ENCODE measurements at regions of chr18 and their contacts with region 1.

Region 1: DNA sequence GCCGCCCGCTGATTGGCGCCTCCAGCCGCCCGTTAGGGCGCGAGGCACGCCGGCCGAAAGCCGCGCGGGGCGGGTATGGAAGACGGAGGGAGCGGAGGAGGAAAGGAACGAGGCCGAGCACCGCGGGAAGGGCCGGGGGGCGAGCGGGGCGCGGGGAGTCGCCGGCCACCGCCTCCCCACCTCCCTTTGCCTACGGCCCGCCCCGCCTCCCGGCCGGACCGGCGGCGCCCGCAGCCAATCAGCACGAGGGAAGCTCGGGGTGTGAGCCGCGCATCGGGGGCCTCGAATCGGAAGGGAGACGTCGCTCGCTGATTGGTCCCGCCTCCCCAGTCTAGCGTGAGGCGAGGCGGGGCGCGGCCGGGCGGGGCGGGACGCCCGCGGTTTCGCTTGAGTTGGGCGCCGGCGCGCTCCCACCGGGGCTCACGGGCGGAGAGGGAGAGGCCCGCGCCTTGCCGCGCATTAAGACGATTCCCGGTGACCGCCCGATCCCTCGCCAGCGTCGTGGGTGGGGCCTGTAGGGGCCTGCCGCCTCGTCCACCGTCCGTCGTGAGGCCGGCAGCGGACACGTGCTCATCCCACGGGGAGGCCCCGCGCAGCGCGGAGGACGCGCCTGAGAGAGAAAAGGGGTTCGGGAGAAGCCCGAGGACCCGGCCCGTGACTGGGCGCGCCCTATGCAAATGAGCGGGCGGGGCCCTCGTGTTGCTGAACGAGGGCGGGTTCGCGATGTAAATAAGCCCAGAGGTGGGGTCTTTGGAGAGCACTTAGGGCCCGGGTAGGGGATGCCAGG is 665 bp upstream of the SMAD2 start:
- DNase-seq: peak; percentile 97
- ATAC-seq: peak; percentile 79
- H3K4me3 Mint-ChIP-seq: peak overlapping the region; percentile 77
- H3K27ac Mint-ChIP-seq: peak overlapping the region; percentile 91
- H3K4me1 Mint-ChIP-seq: peaks cover 36% of the 10 kb centered on the region
- H3K27me3 Mint-ChIP-seq: no peaks in the 10 kb centered on the region

Region 2: DNA sequence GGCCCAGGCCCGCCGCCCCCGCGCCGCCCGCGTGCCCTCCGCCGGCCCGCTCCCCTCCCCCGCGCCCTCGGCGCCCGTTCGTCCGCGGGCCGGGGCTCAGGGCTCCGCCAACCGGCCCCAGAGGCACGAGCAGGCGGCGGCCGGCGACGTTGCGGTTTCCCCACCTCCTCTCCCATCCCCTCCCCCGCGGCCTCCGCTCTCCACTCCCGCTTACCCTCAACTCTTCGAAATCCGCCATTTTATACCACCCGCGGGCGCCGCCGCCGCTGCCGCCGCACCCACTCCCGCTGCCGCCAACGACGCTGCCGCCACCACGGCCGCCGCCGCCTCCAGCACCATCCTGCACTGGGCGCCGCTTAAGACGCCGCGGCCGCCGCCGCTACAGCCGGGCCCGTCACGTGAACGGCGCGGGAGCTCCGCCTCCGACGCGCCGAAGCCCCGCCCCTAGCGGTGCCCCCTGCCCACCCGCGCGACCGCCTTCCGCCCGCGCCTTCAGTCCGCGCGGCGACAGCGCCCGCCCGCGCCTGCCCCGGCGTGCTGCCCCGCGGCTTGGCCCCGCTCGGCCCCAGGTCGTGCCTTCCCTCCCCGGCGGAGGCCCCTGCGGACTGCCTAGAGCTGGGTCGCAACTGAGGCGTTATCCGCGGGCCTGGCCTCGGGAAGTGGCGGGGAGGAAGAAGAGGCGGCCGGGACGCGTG is 1013.9 kb before region 1 on chr18 and contains the starts of genes KATNAL2 and PIAS2:
- CTCF ChIA-PET with region 1: no interaction called
- POLR2A ChIA-PET with region 1: no interaction called
- intact Hi-C with region 1: loop called (anchors 10 kb)
- DNase-seq: peak; percentile 83
- ATAC-seq: peak; percentile 92
- H3K4me3 Mint-ChIP-seq: peak within 1 kb of the TSS; percentile 92
- H3K27ac Mint-ChIP-seq: peak within 1 kb of the TSS; percentile 91
- H3K4me1 Mint-ChIP-seq: peaks cover 45% of the 10 kb centered on the region
- H3K27me3 Mint-ChIP-seq: no peaks in the 10 kb centered on the region
- total RNA-seq, gene KATNAL2: 1.1 to 1.4 TPM
- total RNA-seq, gene PIAS2: 27.1 to 28.2 TPM

Region 3: GRCh38 chr18:47772374-47773248 is 158.5 kb before region 1 on chr18:
- CTCF ChIA-PET with region 1: interaction called, 3 read pairs
- POLR2A ChIA-PET with region 1: no interaction called
- intact Hi-C with region 1: loop called in 1 of 2 experiments (anchors 5 kb)
- DNase-seq: peak; percentile 84
- ATAC-seq: peak; percentile 76
- H3K4me3 Mint-ChIP-seq: no peak overlapping the region
- H3K27ac Mint-ChIP-seq: no peak overlapping the region
- H3K4me1 Mint-ChIP-seq: no peaks in the 10 kb centered on the region
- H3K27me3 Mint-ChIP-seq: peaks cover 2% of the 10 kb centered on the region

Region 4: GRCh38 chr18:47912343-47912742 is 18.8 kb before region 1 on chr18:
- CTCF ChIA-PET with region 1: interaction called, 5 read pairs
- POLR2A ChIA-PET with region 1: interaction called, 17 read pairs
- intact Hi-C with region 1: loop called (anchors 1 kb)
- DNase-seq: peak; percentile 49
- ATAC-seq: peak; percentile 85
- H3K4me3 Mint-ChIP-seq: peak overlapping the region; percentile 44
- H3K27ac Mint-ChIP-seq: peak overlapping the region; percentile 94
- H3K4me1 Mint-ChIP-seq: peaks cover 96% of the 10 kb centered on the region
- H3K27me3 Mint-ChIP-seq: no peaks in the 10 kb centered on the region

Region 5: DNA sequence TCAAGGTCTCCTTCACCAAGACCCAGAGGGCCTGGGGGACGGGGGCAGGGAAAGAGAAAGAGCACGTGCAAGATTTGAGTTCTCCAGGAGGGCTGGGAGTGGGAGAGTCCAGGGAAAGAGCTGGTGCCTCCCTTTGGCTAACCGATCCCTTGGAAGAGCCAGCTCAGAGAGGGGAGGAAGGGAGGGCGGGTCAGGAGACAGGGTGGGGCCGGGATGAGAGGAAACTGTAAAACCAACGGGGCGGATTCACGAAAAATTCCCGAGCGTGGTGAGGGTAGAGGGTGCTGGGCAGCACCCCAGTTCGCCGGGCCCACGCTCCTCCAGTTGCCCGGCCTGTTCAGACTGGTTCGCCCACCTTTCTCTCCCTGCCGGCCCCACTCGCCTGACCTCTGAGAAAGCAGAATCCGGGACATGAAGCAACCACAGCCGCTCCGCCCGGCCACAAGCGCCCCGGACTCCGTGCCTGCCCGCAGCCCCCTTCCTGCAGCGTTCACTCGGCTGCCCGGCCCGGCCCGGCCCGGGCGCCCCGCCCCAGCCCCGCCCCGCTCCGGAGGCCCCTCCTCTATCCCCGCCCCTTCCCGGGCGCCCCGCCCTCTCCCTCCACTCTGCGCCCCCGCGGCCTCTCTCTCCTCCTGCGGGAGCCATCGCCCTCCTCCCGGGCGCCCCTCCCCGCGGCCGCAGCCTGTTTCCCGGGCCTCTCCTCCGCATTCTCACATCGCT is 230.2 kb after region 1 on chr18:
- CTCF ChIA-PET with region 1: no interaction called
- POLR2A ChIA-PET with region 1: no interaction called
- intact Hi-C with region 1: loop called in 1 of 2 experiments (anchors 5 kb)
- DNase-seq: peak; percentile 83
- ATAC-seq: peak; percentile 97
- H3K4me3 Mint-ChIP-seq: peak overlapping the region; percentile 48
- H3K27ac Mint-ChIP-seq: no peak overlapping the region
- H3K4me1 Mint-ChIP-seq: no peaks in the 10 kb centered on the region
- H3K27me3 Mint-ChIP-seq: peaks cover 5% of the 10 kb centered on the region

Region 6: DNA sequence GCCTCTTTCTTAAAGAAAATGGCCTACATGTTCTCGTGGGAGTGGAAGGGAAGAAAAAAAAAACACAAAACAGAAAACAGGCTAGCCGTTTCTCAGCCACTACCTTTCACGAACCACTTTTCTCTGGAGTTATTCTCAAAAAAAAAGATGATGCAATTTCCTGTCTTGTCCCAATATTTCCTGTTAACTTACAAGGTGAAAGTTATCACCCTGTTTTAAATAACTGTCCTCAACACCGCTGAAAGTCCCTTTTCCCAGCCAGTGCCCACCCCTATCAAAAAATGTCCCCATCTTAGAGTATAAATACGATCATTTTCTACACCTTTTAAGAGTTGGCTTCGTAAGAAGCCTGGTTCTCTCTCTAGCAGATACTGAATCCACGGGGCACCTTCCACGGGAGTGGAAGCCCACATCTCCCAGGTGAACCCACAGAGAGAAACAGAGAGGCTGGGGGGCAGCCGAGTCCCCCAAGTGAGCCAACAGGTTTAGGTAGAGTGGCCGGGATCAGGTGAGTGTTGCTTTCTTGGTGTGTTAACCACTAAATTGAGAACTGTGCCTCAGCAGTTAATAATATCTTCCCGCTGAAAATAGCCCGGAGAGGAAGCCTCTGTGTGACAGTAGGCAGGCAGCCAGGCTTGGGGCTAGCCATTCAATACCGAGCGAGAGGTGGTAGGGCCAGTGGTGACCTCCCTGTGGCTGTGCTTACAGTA is 1003.8 kb after region 1 on chr18:
- CTCF ChIA-PET with region 1: no interaction called
- POLR2A ChIA-PET with region 1: interaction called, 6 read pairs
- intact Hi-C with region 1: loop called in 1 of 2 experiments (anchors 10 kb)
- DNase-seq: peak; percentile 10
- ATAC-seq: no peak
- H3K4me3 Mint-ChIP-seq: peak overlapping the region; percentile 60
- H3K27ac Mint-ChIP-seq: peak overlapping the region; percentile 99
- H3K4me1 Mint-ChIP-seq: peaks cover 90% of the 10 kb centered on the region
- H3K27me3 Mint-ChIP-seq: no peaks in the 10 kb centered on the region